ENCODE measurements at regions of chr18 and their contacts with region 1.

Region 1: GRCh38 chr18:21391074-21391673 is 149.1 kb downstream of the GREB1L start:
- DNase-seq: no peak
- ATAC-seq: no peak
- H3K4me3 ChIP-seq: no peak overlapping the region
- H3K27ac ChIP-seq: no peak overlapping the region
- H3K4me1 ChIP-seq: peaks cover 0 to 14% (median 0%) of the 10 kb centered on the region in 9 donors
- H3K27me3 ChIP-seq: peaks cover 0 to 6% (median 0%) of the 10 kb centered on the region in 7 donors
- CTCF ChIP-seq: no peak

Region 2: DNA sequence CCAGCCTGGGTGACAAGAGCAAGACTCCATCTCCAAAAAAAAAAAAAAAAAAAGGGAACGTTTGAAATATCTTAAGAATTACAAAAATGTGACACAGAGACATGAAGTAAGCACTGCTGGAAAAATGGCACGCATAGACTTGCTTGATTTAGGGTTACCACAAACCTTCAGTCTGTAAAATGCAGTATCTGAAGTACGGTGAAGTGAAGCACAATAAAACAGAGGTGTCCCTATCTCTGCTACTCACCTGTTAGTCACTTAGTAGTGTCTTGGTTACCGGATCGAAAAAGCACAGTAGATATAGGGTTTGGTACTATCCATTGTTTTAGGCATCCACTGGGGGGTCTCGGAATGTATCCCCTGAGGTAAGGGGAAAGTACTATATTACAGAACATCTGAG is 160.7 kb before region 1 on chr18:
- intact Hi-C with region 1: loop called in 1 of 10 experiments (anchors 10 kb)
- DNase-seq: no peak
- ATAC-seq: no peak
- H3K4me3 ChIP-seq: no peak overlapping the region
- H3K27ac ChIP-seq: no peak overlapping the region
- H3K4me1 ChIP-seq: no peaks in the 10 kb centered on the region
- H3K27me3 ChIP-seq: peaks cover 0 to 3% (median 0%) of the 10 kb centered on the region in 7 donors
- CTCF ChIP-seq: no peak

Region 3: DNA sequence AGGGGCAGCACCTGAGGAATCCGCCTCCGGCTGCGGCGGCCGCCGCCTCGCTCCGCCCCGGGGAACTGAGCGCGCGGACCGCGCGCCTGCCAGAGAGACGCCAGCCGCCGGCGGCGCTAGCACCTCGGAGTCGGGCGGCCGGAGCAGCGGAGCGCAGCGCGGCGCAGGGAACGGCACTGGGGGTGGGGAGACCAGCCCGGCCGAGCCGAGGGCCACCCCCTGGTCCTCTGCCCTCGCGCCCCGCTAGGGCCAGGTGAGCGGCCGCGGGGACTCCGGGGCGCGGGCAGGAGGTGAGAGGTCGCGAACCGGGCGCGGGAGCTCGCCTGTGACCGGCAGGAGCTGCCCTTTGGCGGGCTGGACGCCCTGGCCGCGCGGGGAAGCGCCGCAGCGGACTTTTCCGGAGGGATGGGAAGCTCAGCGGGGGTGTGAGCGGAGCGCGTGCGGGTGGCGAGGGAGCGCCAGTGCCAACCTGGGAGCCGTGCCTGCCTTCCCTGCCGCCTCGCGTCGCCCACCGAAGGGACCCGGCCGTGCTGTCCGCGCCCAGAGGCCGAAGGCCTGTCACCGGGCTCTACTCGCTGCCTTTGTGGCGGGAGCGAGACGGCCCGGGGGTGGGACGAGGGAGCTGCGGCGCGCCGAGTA is 148.9 kb before region 1 on chr18 and contains the start of gene GREB1L:
- intact Hi-C with region 1: loop called in 2 of 10 experiments (anchors 10 kb)
- DNase-seq: peak; percentile 42 to 69
- ATAC-seq: peak; percentile 86 to 97 (median 94)
- H3K4me3 ChIP-seq: peak within 1 kb of the TSS; percentile 48 to 71 (median 66)
- H3K27ac ChIP-seq: peak within 1 kb of the TSS in 8 of 10 donors; percentile 12 to 77 (median 58)
- H3K4me1 ChIP-seq: peaks cover 0 to 21% (median 16%) of the 10 kb centered on the region in 9 donors
- H3K27me3 ChIP-seq: peaks cover 0 to 80% (median 46%) of the 10 kb centered on the region in 7 donors
- CTCF ChIP-seq: peak in 6 of 9 donors; percentile 19 to 58 (median 44)
- total RNA-seq, gene GREB1L: 2.7 to 14.3 (median 11.8) TPM

Region 4: DNA sequence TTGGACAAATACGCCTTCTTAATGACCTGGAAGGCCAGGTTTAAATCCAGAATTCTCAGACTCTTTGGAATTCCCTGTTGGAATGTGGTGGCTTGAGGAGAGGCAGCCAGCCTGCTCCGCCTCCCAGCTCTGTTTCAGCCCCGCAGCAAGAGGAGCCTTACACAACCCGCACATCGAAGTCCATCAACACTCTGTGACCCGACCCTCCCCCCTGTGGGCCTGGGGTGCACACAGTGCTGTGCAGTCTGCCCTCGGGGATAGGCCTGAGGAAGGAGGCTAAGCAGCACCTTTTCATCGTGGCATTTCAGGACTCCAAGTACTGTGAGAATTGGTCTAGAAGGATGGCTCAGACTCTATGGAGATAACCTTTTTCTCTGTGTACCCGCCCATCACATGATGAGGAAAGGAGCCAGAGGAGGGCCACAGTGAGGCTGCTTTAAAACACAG is 75.4 kb before region 1 on chr18:
- intact Hi-C with region 1: loop called in 1 of 10 experiments (anchors 10 kb)
- DNase-seq: no peak
- ATAC-seq: peak in 1 of 8 donors; percentile 55
- H3K4me3 ChIP-seq: no peak overlapping the region
- H3K27ac ChIP-seq: no peak overlapping the region
- H3K4me1 ChIP-seq: no peaks in the 10 kb centered on the region
- H3K27me3 ChIP-seq: no peaks in the 10 kb centered on the region
- CTCF ChIP-seq: no peak

Region 5: DNA sequence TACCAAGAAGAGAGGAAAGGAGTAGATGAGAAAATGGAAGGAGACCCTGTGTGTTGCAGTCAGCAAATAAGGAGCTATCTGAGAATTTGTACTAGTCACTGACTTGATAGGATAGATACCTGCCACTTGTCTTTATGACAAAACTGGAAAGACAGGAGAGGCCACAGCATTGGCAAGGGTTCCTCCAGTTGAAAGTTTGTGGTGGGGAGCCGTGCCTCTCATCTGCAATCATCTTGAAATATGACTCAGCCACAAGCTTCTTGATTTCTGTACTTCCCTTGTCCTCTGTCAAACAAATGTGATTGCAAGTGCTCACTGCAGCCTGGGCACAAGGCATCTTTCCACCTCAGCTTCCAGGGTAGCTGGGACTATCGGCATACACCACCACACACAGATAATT is 50.0 kb before region 1 on chr18:
- intact Hi-C with region 1: loop called in 1 of 10 experiments (anchors 10 kb)
- DNase-seq: no peak
- ATAC-seq: no peak
- H3K4me3 ChIP-seq: no peak overlapping the region
- H3K27ac ChIP-seq: no peak overlapping the region
- H3K4me1 ChIP-seq: no peaks in the 10 kb centered on the region
- H3K27me3 ChIP-seq: no peaks in the 10 kb centered on the region
- CTCF ChIP-seq: no peak